Testis (tissue), 5 donors: ENCODE measurements at regions of chr10 and their contacts with region 1.

Region 1: GRCh38 chr10:53770903-53771302 is 998.3 kb upstream of the MBL2 start:
- DNase-seq: no peak
- H3K4me3 ChIP-seq: no peak overlapping the region
- H3K27ac ChIP-seq: no peak overlapping the region
- H3K4me1 ChIP-seq: no peaks in the 10 kb centered on the region
- H3K27me3 ChIP-seq: no peaks in the 10 kb centered on the region
- CTCF ChIP-seq: no peak
- POLR2A ChIP-seq: no peak

Region 2: DNA sequence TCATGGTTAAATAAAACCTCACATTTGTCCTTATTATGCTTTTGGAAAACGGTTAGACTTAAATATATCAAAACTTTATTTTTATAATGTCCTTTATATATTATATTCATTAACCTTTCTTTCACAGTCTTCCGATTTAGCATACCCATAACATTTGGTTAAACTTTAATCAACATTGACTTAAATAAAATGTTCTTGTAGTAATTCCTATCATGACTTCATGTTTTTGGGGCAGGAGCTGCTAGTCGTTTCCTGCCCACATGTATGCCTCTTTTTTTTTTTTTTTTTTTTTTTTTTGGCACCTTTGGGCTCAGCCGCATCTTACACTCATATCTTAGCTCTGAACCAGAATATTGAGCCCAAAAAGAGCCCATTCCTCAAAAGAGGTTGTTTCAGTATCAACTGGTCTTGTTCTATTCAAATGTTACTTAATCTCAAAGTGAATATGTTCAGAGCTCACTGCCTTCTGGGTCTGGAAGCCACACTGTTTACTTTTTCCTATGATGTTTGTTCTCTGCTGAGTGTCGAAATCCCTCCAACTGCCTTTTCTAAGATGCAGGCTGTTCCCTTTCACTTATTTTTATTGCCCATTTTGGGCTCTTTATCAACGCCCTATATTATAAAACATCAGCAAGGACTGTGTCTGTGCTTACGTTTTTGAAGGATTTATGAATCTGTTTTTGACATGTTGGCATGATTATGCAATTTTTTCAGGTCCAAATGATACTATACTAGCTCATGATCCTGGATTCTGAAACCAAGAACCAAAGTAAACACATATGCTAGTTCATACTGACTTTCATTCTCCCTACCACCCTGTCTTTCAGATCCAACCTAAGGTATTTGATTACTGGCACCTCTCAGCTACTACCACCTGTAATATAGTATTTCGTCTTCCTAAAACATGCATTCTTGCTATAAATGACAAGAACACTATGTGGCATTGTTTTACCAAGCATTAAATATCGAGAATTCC is 115.7 kb after region 1 on chr10:
- intact Hi-C with region 1: no loop called
- DNase-seq: no peak
- H3K4me3 ChIP-seq: no peak overlapping the region
- H3K27ac ChIP-seq: no peak overlapping the region
- H3K4me1 ChIP-seq: no peaks in the 10 kb centered on the region
- H3K27me3 ChIP-seq: no peaks in the 10 kb centered on the region
- CTCF ChIP-seq: no peak
- POLR2A ChIP-seq: no peak

Region 3: GRCh38 chr10:54194806-54195205 is 423.9 kb after region 1 on chr10:
- intact Hi-C with region 1: loop called (anchors 10 kb)
- DNase-seq: no peak
- H3K4me3 ChIP-seq: no peak overlapping the region
- H3K27ac ChIP-seq: no peak overlapping the region
- H3K4me1 ChIP-seq: no peaks in the 10 kb centered on the region
- H3K27me3 ChIP-seq: no peaks in the 10 kb centered on the region
- CTCF ChIP-seq: no peak
- POLR2A ChIP-seq: no peak

Region 4: GRCh38 chr10:54266395-54266794 is 495.5 kb after region 1 on chr10:
- intact Hi-C with region 1: no loop called
- DNase-seq: no peak
- H3K4me3 ChIP-seq: no peak overlapping the region
- H3K27ac ChIP-seq: no peak overlapping the region
- H3K4me1 ChIP-seq: no peaks in the 10 kb centered on the region
- H3K27me3 ChIP-seq: no peaks in the 10 kb centered on the region
- CTCF ChIP-seq: no peak
- POLR2A ChIP-seq: no peak